ENCODE measurements at regions of chr15 and their contacts with region 1.

Region 1: DNA sequence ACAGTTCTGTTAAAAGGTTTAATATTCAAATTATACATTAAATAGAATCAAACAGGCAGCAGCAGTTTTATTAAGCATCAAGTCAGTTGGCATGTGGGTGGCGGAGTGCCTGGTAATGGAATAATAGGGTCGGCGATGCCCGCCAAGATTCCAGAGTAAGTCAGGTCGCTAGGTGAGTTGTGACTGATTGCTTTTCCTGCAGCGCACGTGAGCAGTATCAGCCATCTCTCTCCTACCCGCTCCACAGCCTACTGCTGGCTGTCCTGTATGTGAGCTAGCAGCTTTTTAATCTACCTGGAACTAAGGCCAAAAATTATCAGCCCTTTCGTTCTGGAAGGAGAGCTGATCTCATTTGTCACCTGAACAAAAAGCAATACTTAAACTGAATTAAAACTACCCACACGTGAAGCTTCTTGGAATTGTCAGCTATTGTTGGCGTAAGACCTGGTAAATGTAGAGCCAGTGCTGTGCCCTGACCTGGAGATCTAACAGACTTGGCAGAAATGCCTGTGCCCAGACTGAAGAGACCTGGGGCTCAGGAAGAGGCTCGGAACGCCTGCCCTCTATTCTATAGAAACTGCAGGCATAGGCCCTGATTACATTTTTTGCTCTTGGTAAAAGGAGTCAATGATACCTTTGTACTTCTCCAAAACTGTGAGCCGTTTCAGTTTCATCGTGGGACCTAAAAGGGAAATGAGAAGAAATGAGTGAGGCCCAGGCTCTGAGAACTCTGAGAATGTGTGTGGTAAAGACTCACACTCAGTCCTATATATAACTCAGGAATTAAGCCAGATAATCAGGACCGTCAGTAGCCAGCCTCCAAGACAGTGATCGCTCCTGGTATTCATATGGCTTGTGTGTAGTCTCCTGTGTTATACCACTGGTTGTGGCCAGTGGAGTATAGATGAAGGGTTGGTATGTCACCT is 21.9 kb downstream of the IDH3A start:
- DNase-seq: no peak
- ATAC-seq: peak; percentile 73
- H3K4me3 Mint-ChIP-seq: peak overlapping the region; percentile 77
- H3K27ac Mint-ChIP-seq: peak overlapping the region; percentile 95
- H3K4me1 Mint-ChIP-seq: peaks cover 92% of the 10 kb centered on the region
- H3K27me3 Mint-ChIP-seq: no peaks in the 10 kb centered on the region
- CTCF ChIP-seq: no peak

Region 2: GRCh38 chr15:78149068-78149804 is 21.9 kb before region 1 on chr15 and contains the start of gene IDH3A:
- CTCF ChIA-PET with region 1: interaction called, 3 read pairs
- POLR2A ChIA-PET with region 1: interaction called, 86 read pairs
- intact Hi-C with region 1: loop called (anchors 1 kb)
- DNase-seq: peak; percentile 99
- ATAC-seq: peak; percentile 97
- H3K4me3 Mint-ChIP-seq: peak within 1 kb of the TSS; percentile 94
- H3K27ac Mint-ChIP-seq: peak within 1 kb of the TSS; percentile 91
- H3K4me1 Mint-ChIP-seq: peaks cover 46% of the 10 kb centered on the region
- H3K27me3 Mint-ChIP-seq: no peaks in the 10 kb centered on the region
- CTCF ChIP-seq: no peak
- total RNA-seq, gene IDH3A: 111 and 124 TPM in 2 replicates

Region 3: GRCh38 chr15:78155355-78155939 is 15.7 kb before region 1 on chr15:
- CTCF ChIA-PET with region 1: no interaction called
- POLR2A ChIA-PET with region 1: interaction called, 86 read pairs
- intact Hi-C with region 1: loop called (anchors 1 kb)
- DNase-seq: no peak
- ATAC-seq: no peak
- H3K4me3 Mint-ChIP-seq: no peak overlapping the region
- H3K27ac Mint-ChIP-seq: no peak overlapping the region
- H3K4me1 Mint-ChIP-seq: peaks cover 21% of the 10 kb centered on the region
- H3K27me3 Mint-ChIP-seq: no peaks in the 10 kb centered on the region
- CTCF ChIP-seq: no peak

Measured in activated B cell treated with CpG ODN at 0.5 μM for 24 hours (primary cell).